ENCODE measurements at regions of chr22 and their contacts with region 1.

Region 1: DNA sequence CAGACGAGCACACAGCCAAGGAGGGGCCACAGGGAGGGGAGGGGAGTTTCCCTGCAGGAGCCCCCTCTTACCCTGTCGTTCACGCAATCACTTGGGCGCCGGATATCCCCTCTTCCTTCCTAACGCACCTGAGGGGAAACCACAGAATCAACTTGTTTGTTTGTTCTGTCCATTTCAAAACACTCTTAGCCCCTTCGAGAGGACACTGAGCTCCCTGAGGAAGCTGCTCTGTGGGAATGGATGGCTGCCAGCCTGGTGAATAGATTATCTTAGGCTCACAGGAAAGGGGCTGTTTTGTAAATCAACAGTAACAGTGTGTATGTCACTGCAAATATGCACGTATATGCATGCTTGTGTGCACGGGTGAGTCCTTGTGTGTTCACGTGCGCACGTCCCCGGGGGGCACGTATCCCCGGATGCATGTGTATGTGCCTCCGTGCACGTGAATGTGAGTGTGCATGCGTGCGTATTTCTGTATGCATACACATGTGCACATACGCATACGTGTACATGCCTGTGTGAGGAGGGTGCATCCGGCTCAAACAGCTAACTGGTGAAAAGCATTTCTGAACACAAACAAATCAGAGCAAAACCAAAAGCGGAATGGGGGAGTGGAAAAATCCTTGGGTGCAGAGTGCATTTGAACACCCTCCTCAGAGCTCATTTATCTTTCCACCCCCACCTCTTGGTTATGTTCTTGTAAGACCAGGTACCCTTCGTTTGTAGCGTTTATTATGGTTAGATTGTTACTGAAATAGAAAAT is 7.2 kb downstream of the ARSA start:
- DNase-seq: peak; percentile 89
- H3K4me3 Mint-ChIP-seq: peak overlapping the region; percentile 72
- H3K27ac Mint-ChIP-seq: peak overlapping the region; percentile 98
- H3K4me1 Mint-ChIP-seq: peaks cover 35% of the 10 kb centered on the region
- H3K27me3 Mint-ChIP-seq: no peaks in the 10 kb centered on the region

Region 2: DNA sequence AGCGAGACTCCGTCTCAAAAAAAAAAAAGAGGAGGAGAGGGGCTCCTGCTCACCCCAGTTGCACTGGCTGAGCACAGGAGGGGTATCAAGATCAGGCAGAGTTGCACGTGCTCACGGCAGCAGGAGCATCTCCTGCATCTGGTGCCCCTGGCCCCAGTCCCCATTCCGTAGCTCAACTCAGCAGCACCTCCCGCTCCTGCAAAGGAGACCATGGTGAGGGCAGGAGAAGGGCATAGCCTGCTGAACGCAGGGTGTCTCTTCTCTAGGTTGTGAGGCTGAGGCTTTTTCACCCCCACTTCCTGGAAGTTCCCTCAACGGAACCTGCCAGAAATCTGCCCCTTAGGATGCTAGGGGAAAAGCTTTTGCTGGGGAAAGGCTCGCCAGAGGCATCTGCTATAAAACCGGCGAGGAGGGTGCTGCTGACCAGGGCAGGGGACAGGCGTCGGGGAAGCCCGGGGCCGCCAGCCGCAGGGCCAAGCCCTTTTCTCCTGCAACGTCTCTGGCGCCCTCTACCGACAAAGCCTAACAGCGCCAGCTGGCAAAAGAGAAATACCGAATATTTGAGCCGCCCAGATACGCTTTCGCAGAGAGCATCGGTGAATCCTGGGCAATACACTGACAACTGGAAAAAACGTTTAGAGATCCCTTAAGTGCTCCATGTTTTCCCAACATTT is 278.7 kb before region 1 on chr22:
- CTCF ChIA-PET with region 1: interaction called, 3 read pairs
- intact Hi-C with region 1: loop called (anchors 2 kb)
- DNase-seq: peak; percentile 94
- H3K4me3 Mint-ChIP-seq: peak overlapping the region; percentile 71
- H3K27ac Mint-ChIP-seq: peak overlapping the region; percentile 82
- H3K4me1 Mint-ChIP-seq: peaks cover 8% of the 10 kb centered on the region
- H3K27me3 Mint-ChIP-seq: no peaks in the 10 kb centered on the region

Region 3: GRCh38 chr22:50507991-50508884 is 112.5 kb before region 1 on chr22 and contains the start of gene NCAPH2:
- CTCF ChIA-PET with region 1: interaction called, 4 read pairs
- intact Hi-C with region 1: loop called (anchors 1 kb)
- DNase-seq: peak; percentile 98
- H3K4me3 Mint-ChIP-seq: peak within 1 kb of the TSS; percentile 96
- H3K27ac Mint-ChIP-seq: peak within 1 kb of the TSS; percentile 96
- H3K4me1 Mint-ChIP-seq: peaks cover 30% of the 10 kb centered on the region
- H3K27me3 Mint-ChIP-seq: no peaks in the 10 kb centered on the region
- total RNA-seq, gene NCAPH2: 104 to 115 TPM

Region 4: GRCh38 chr22:50537765-50538164 is 83.0 kb before region 1 on chr22:
- CTCF ChIA-PET with region 1: interaction called, 12 read pairs
- intact Hi-C with region 1: loop called (anchors 1 kb)
- DNase-seq: no peak
- H3K4me3 Mint-ChIP-seq: no peak overlapping the region
- H3K27ac Mint-ChIP-seq: peak overlapping the region; percentile 98
- H3K4me1 Mint-ChIP-seq: peaks cover 77% of the 10 kb centered on the region
- H3K27me3 Mint-ChIP-seq: no peaks in the 10 kb centered on the region

Region 5: GRCh38 chr22:50576070-50576469 is 44.7 kb before region 1 on chr22:
- CTCF ChIA-PET with region 1: interaction called, 8 read pairs
- intact Hi-C with region 1: loop called (anchors 1 kb)
- DNase-seq: peak; percentile 41
- H3K4me3 Mint-ChIP-seq: no peak overlapping the region
- H3K27ac Mint-ChIP-seq: no peak overlapping the region
- H3K4me1 Mint-ChIP-seq: peaks cover 18% of the 10 kb centered on the region
- H3K27me3 Mint-ChIP-seq: no peaks in the 10 kb centered on the region

Region 6: DNA sequence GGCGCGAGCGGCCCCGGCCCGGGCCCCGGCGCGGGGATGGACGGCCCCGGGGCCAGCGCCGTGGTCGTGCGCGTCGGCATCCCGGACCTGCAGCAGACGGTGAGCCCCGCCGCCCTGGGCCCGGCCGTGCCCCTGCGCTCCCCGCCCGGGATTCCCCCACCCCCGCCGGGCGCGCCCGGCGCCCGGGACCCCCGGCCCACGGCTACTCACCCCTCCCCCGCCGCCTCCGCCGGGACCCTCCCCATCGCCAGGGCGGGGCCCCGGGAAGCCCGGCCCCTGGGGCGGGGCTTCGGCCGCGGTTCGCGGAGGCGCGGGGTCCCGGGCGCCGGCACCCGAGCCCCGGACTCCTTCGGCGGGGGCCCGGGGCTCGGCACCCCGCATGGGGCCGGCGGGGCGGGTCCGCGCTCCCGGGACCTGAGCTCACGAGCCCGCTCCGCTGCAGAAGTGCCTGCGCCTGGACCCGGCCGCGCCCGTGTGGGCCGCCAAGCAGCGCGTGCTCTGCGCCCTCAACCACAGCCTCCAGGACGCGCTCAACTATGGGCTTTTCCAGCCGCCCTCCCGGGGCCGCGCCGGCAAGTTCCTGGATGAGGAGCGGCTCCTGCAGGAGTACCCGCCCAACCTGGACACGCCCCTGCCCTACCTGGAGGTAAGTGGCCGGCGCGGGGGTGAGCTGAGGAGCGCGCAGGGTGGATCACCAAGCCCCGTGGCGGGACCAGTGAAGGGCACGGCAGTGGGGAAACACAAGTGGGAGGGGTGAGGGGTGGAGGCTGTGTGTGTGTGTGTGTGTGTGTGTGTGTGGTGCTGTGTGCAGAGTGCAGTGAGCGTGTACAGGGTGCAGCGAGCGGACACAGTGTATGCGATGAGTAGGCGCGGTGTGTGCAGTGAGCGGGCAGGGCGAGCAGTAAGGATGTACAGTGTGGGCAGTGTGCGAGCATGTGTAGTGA is 54.1 kb after region 1 on chr22:
- CTCF ChIA-PET with region 1: no interaction called
- intact Hi-C with region 1: no loop called
- DNase-seq: no peak
- H3K4me3 Mint-ChIP-seq: peak overlapping the region; percentile 46
- H3K27ac Mint-ChIP-seq: no peak overlapping the region
- H3K4me1 Mint-ChIP-seq: peaks cover 8% of the 10 kb centered on the region
- H3K27me3 Mint-ChIP-seq: peaks cover 27% of the 10 kb centered on the region

Measured in activated naive CD4-positive, alpha-beta T cell treated with anti-CD3 and anti-CD28 coated beads for 36 hours (primary cell).